ENCODE measurements at regions of chr17 and their contacts with region 1.

Region 1: GRCh38 chr17:36629252-36629847 is 28.0 kb downstream of the MRM1 start:
- DNase-seq: peak; percentile 81
- H3K4me3 Mint-ChIP-seq: no peak overlapping the region
- H3K27ac Mint-ChIP-seq: no peak overlapping the region
- H3K4me1 Mint-ChIP-seq: no peaks in the 10 kb centered on the region
- H3K27me3 Mint-ChIP-seq: peaks cover 12% of the 10 kb centered on the region

Region 2: DNA sequence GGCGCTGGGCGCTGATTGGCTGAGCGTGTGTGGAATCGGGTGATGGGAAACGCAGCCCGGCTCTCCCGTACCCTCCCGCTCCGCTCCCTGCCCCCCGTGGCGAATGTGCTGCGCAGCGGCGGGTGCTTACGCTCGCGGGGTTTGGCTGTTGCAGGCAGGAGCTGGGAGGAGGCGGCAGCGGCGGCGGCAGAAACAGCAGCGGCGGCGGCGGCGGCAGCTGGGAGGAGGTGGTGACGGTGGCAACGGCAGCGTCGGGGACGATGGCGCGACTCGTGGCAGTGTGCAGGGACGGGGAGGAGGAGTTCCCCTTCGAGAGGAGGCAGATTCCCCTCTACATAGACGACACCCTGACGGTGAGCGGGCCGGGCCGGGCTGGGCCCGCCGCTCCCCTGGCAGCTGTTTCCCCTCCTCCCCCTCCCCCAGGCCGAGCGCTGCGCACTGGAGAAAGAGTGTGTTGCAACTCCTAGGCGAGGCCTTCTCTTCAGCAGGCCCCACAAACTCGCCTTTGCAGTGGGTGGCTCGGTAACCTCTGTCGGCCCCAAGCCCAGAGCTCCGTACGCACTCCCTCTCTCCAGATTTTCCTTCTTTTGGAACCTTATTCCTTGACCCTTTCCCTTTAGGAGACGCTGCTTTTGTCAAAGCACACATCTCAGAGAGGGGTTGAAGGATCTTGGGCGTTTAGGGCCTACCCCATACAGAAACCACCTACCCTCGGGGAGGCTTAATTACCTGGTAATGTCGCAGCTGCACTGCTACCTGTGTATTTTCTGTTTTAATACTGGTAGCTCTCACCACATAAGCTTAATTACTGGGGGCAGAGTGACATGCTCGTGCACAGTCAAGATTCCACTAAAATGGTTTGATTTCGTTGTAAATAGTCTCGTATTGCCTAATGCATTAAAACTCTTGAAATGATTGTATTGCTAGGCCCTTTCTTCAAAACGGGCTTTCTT is 83.6 kb before region 1 on chr17:
- CTCF ChIA-PET with region 1: no interaction called
- POLR2A ChIA-PET with region 1: no interaction called
- DNase-seq: peak; percentile 97
- H3K4me3 Mint-ChIP-seq: peak overlapping the region; percentile 96
- H3K27ac Mint-ChIP-seq: peak overlapping the region; percentile 96
- H3K4me1 Mint-ChIP-seq: peaks cover 51% of the 10 kb centered on the region
- H3K27me3 Mint-ChIP-seq: no peaks in the 10 kb centered on the region

Region 3: GRCh38 chr17:36705874-36706731 is 76.8 kb after region 1 on chr17:
- CTCF ChIA-PET with region 1: interaction called, 10 read pairs
- POLR2A ChIA-PET with region 1: interaction called, 3 read pairs
- DNase-seq: peak; percentile 67
- H3K4me3 Mint-ChIP-seq: no peak overlapping the region
- H3K27ac Mint-ChIP-seq: no peak overlapping the region
- H3K4me1 Mint-ChIP-seq: no peaks in the 10 kb centered on the region
- H3K27me3 Mint-ChIP-seq: peaks cover 39% of the 10 kb centered on the region

Region 4: GRCh38 chr17:36755586-36755985 is 126.2 kb after region 1 on chr17:
- CTCF ChIA-PET with region 1: interaction called, 17 read pairs
- POLR2A ChIA-PET with region 1: no interaction called
- DNase-seq: peak; percentile 50
- H3K4me3 Mint-ChIP-seq: no peak overlapping the region
- H3K27ac Mint-ChIP-seq: no peak overlapping the region
- H3K4me1 Mint-ChIP-seq: no peaks in the 10 kb centered on the region
- H3K27me3 Mint-ChIP-seq: peaks cover 2% of the 10 kb centered on the region

Region 5: GRCh38 chr17:37047631-37048104 is 418.3 kb after region 1 on chr17:
- CTCF ChIA-PET with region 1: interaction called, 11 read pairs
- POLR2A ChIA-PET with region 1: no interaction called
- DNase-seq: peak; percentile 84
- H3K4me3 Mint-ChIP-seq: no peak overlapping the region
- H3K27ac Mint-ChIP-seq: no peak overlapping the region
- H3K4me1 Mint-ChIP-seq: peaks cover 9% of the 10 kb centered on the region
- H3K27me3 Mint-ChIP-seq: no peaks in the 10 kb centered on the region

Region 6: GRCh38 chr17:37239690-37240334 is 610.5 kb after region 1 on chr17:
- CTCF ChIA-PET with region 1: interaction called, 15 read pairs
- POLR2A ChIA-PET with region 1: no interaction called
- DNase-seq: no peak
- H3K4me3 Mint-ChIP-seq: no peak overlapping the region
- H3K27ac Mint-ChIP-seq: no peak overlapping the region
- H3K4me1 Mint-ChIP-seq: no peaks in the 10 kb centered on the region
- H3K27me3 Mint-ChIP-seq: no peaks in the 10 kb centered on the region

Measured in activated CD4-positive, alpha-beta memory T cell treated with anti-CD3 and anti-CD28 coated beads, Interleukin-2, amount 10 ng/mL, durations not matched to agents 7 days and 5 days (primary cell).